Activated naive CD4-positive, alpha-beta T cell treated with anti-CD3 and anti-CD28 coated beads, Interleukin-2, amount 10 ng/mL, durations not matched to agents 7 days and 5 days (primary cell): ENCODE measurements at regions of chr6 and their contacts with region 1.

Region 1: GRCh38 chr6:151765444-151765886 is 42.0 kb upstream of the ESR1 start:
- DNase-seq: peak; percentile 65
- H3K4me3 Mint-ChIP-seq: no peak overlapping the region
- H3K27ac Mint-ChIP-seq: no peak overlapping the region
- H3K4me1 Mint-ChIP-seq: peaks cover 40% of the 10 kb centered on the region
- H3K27me3 Mint-ChIP-seq: peaks cover 4% of the 10 kb centered on the region

Region 2: DNA sequence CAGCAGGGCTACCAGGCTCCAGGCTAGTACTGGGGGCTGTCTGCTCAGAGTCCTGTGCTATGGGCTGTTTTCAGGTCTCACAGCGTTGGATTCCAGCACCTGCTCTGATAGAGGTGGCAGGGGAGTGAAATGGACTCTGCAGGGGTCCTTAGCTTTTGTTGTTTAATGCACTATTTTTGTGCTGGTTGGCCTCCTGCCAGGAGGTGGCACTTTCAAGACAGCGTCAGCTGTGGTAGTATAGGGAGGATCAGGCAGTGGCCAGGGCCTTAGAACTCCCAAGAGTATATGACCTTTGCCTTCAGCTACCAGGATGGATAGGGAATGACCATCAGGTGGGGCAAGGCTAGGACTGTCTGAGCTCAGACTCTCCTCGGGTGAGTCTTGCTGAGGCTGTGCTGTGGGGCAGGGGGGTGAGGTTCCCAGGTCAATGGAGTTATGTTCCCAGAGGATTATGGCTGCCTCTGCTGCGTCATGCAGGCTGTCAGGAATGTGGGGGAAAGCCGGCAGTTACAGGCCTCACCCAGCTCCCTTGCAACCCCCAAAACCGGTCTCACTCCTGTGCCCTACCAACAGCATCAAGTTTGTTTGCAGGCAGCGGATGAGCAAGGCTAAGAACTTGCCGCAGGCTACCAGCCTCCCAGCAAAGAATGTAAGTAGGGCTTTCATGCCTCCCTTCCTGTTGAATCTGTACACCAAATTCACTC is 135.4 kb after region 1 on chr6:
- CTCF ChIA-PET with region 1: no interaction called
- DNase-seq: no peak
- H3K4me3 Mint-ChIP-seq: no peak overlapping the region
- H3K27ac Mint-ChIP-seq: no peak overlapping the region
- H3K4me1 Mint-ChIP-seq: no peaks in the 10 kb centered on the region
- H3K27me3 Mint-ChIP-seq: no peaks in the 10 kb centered on the region

Region 3: GRCh38 chr6:152124429-152125074 is 359.1 kb after region 1 on chr6:
- CTCF ChIA-PET with region 1: interaction called, 30 read pairs
- DNase-seq: no peak
- H3K4me3 Mint-ChIP-seq: no peak overlapping the region
- H3K27ac Mint-ChIP-seq: peak overlapping the region; percentile 7
- H3K4me1 Mint-ChIP-seq: peaks cover 2% of the 10 kb centered on the region
- H3K27me3 Mint-ChIP-seq: no peaks in the 10 kb centered on the region

Region 4: DNA sequence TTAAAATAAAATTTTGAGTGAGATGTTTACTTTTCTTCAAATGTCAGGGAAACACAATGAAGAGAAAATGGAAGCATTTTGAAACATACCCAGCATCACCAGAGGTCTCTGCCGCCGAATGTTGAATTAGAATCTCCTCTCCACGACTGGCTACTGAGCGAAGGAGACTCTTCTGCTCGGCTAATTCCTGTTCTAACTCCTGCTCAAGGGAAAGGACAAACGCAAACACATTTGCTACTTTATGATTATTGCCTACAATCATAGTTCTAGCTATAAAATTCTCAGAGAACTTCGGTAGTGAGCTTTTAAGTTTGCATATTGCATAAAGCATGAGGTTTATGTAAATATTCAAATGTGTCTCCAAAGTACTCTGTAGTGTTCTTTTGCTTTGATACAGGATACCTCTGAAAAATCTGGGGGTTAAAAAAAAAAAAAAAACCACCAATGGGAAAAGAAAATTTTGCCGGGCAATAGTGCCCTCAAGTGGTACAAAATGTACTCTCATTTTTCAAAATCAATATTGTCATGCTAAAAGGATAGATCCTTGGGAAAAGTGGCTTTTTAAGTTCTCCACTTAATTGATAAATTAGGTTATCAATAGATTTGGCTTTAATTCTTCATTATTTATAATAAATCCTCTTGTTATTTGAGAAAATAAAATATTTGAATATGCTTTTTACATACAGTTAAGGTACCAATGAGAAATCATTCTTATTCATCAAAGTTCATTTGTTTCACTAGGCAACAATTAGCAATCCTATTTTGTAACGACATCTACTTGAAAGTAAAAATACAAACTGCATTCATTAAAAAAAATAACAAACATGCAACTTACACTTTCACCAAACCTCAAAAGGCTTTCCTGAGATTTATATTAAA is 502.7 kb after region 1 on chr6:
- CTCF ChIA-PET with region 1: interaction called, 21 read pairs
- DNase-seq: peak; percentile 43
- H3K4me3 Mint-ChIP-seq: no peak overlapping the region
- H3K27ac Mint-ChIP-seq: no peak overlapping the region
- H3K4me1 Mint-ChIP-seq: peaks cover 3% of the 10 kb centered on the region
- H3K27me3 Mint-ChIP-seq: no peaks in the 10 kb centered on the region